ENCODE measurements at regions of chr2 and their contacts with region 1.

Region 1: GRCh38 chr2:11863513-11864328 is 117.3 kb downstream of the LPIN1 start:
- H3K4me3 Mint-ChIP-seq: peak overlapping the region; percentile 49
- H3K27ac Mint-ChIP-seq: no peak overlapping the region
- H3K4me1 Mint-ChIP-seq: peaks cover 61% of the 10 kb centered on the region
- H3K27me3 Mint-ChIP-seq: peaks cover 40% of the 10 kb centered on the region

Region 2: DNA sequence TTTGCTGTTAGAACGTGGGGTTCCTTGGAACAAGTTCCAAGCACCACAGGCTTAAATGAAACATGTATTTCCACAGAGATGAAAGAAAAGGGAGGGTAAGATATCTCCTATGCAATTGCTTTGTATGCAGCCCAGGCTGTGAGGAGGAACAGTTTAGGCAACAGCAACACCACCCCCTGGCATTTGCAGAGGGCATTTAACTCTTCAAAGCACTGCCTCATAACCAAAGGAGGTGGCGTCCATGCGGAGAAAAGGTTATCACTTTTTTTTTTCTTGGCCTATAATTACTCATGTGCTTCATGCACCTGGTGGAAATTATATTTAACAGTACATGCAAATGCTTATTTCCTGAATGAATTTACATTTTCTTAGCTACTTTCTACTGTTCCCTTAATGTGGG is 168.7 kb after region 1 on chr2:
- intact Hi-C with region 1: no loop called
- H3K4me3 Mint-ChIP-seq: no peak overlapping the region
- H3K27ac Mint-ChIP-seq: no peak overlapping the region
- H3K4me1 Mint-ChIP-seq: peaks cover 3% of the 10 kb centered on the region
- H3K27me3 Mint-ChIP-seq: peaks cover 30% of the 10 kb centered on the region

Region 3: DNA sequence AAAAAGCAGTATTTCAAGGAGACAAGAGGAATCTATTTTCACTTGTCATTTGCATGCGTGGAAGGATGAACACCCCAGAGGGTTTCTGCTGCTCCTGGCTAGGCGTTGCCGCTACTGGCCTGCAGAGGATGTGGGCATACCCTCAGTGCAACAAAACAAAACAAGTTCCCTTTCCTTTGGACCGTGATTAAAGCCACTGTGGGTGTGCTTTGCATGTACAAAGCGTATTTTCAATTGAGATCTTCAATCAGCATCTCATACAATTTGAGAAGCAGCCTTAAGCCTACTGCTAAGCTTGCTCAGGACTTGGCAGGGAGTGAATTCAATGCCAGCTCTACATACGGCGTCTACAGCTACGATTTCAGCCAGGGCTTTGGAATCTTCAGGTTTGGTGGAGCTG is 181.1 kb after region 1 on chr2:
- intact Hi-C with region 1: loop called (anchors 10 kb)
- H3K4me3 Mint-ChIP-seq: peak overlapping the region; percentile 7
- H3K27ac Mint-ChIP-seq: peak overlapping the region; percentile 62
- H3K4me1 Mint-ChIP-seq: peaks cover 33% of the 10 kb centered on the region
- H3K27me3 Mint-ChIP-seq: peaks cover 2% of the 10 kb centered on the region

Region 4: DNA sequence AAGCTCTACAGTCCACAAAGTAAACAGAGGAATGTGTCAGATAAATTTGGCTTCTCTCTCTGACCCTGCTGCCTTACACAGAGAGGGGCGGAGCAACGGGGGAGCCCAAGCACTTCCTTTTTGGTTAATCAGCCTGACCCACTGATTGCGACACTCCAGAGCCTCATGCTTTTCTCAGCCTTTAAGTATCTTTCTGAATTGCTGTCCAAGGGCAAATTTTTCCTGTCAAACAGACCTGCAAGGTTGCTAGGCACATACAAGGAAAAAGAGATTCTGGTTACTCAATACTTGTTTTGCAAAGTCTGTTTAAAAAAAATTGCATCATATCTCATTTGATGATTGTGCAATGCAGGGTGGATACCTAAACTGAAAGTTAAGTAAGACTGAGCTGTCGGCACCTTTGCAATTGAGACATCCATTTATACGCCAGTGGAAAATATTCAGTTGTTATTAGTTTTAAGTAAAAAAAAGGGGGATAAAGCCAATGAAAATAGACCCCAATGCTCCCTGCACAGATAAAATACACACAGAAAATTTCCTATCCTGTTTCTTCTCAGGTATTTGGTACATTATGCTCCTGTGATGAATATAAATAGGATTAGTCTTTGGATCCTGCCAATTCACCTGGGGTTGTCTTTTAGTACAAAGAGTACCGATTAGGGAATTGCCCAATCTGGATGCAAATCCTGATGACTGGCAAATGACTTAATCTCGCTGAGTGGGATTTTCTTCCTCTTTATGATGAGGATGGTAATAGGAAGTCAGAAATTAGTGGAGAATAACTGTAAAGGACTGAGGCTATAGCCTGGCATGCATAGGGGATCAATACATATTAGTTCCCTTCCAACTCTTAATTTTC is 592.8 kb after region 1 on chr2:
- intact Hi-C with region 1: loop called (anchors 10 kb)
- H3K4me3 Mint-ChIP-seq: peak overlapping the region; percentile 32
- H3K27ac Mint-ChIP-seq: no peak overlapping the region
- H3K4me1 Mint-ChIP-seq: peaks cover 36% of the 10 kb centered on the region
- H3K27me3 Mint-ChIP-seq: no peaks in the 10 kb centered on the region